ENCODE measurements at regions of chr1 and their contacts with region 1.

Region 1: DNA sequence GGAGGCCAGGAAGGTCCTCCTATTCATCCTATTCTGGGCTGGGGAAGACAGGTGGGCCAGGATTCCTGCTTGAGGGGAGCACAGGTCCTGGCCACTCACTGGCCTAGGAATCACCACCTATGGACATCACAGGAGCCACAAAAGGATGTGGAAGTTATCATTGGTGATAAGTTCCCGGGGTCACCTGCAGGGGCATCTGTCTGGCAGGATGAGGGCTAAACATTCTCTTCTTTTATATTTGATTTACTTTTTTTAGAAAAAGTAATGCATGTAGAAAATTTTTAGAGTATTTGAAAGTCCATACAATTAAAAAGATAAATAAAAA is 33.2 kb upstream of the KIAA0040 start:
- DNase-seq: no peak
- ATAC-seq: peak; percentile 22
- H3K4me3 ChIP-seq: no peak overlapping the region
- H3K4me3 Mint-ChIP-seq: peak overlapping the region; percentile 74
- H3K27ac ChIP-seq: peak overlapping the region; percentile 82 to 86
- H3K27ac Mint-ChIP-seq: peak overlapping the region; percentile 95
- H3K4me1 ChIP-seq: peaks cover 62 to 65% of the 10 kb centered on the region in 2 donors
- H3K4me1 Mint-ChIP-seq: peaks cover 81% of the 10 kb centered on the region
- H3K27me3 ChIP-seq: no peaks in the 10 kb centered on the region
- H3K27me3 Mint-ChIP-seq: no peaks in the 10 kb centered on the region
- CTCF ChIP-seq: peak; percentile 57

Region 2: GRCh38 chr1:175162955-175163354 is 62.8 kb before region 1 on chr1:
- CTCF ChIA-PET with region 1: no interaction called
- POLR2A ChIA-PET with region 1: no interaction called
- intact Hi-C with region 1: no loop called
- DNase-seq: no peak
- ATAC-seq: no peak
- H3K4me3 ChIP-seq: no peak overlapping the region
- H3K4me3 Mint-ChIP-seq: no peak overlapping the region
- H3K27ac ChIP-seq: peak overlapping the region in 1 of 2 donors; percentile 5
- H3K27ac Mint-ChIP-seq: peak overlapping the region; percentile 67
- H3K4me1 ChIP-seq: no peaks in the 10 kb centered on the region
- H3K4me1 Mint-ChIP-seq: peaks cover 13% of the 10 kb centered on the region
- H3K27me3 ChIP-seq: no peaks in the 10 kb centered on the region
- H3K27me3 Mint-ChIP-seq: no peaks in the 10 kb centered on the region
- CTCF ChIP-seq: no peak

Region 3: DNA sequence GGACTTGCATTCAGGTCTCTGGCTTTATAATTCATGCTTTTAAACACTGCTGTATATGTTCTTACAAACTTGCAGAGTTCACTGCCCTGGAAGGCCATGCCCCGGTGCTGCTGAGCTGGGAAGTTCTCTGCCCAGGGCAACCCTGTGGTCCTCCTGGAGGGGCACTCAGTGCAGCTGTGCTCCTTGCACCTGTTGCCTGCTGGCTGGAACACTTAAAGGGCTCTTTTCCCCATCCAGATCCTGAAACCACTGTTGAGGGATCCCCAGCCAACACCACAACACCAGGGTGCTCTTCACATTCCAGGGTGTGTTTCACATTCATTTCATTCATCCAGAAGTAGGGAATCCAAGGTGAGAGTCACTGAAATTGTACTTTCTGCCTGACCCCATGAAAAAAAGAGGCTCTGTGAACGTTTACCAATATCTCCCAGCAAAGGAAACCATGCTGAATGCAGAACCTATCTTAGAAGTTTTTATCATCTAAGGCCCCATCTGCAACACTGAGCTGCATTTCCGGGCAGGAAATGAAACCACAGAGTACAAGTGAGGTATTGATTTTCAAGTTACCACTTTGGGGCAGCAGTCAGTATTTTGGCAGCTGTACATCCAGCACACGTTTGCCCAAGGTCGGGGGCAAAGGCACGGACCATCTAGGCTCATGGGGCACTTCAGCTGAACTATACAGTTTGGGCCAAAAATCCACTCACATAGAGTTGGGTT is 16.8 kb before region 1 on chr1:
- CTCF ChIA-PET with region 1: interaction called, 8 read pairs
- POLR2A ChIA-PET with region 1: interaction called, 6 read pairs
- intact Hi-C with region 1: loop called (anchors 1 kb)
- DNase-seq: peak; percentile 75
- ATAC-seq: peak; percentile 92
- H3K4me3 ChIP-seq: peak overlapping the region in 2 of 5 experiments; percentile 5 to 47
- H3K4me3 Mint-ChIP-seq: peak overlapping the region; percentile 86
- H3K27ac ChIP-seq: peak overlapping the region; percentile 86 to 88
- H3K27ac Mint-ChIP-seq: peak overlapping the region; percentile 99
- H3K4me1 ChIP-seq: peaks cover 45 to 60% of the 10 kb centered on the region in 2 donors
- H3K4me1 Mint-ChIP-seq: peaks cover 69% of the 10 kb centered on the region
- H3K27me3 ChIP-seq: no peaks in the 10 kb centered on the region
- H3K27me3 Mint-ChIP-seq: no peaks in the 10 kb centered on the region
- CTCF ChIP-seq: no peak

Region 4: DNA sequence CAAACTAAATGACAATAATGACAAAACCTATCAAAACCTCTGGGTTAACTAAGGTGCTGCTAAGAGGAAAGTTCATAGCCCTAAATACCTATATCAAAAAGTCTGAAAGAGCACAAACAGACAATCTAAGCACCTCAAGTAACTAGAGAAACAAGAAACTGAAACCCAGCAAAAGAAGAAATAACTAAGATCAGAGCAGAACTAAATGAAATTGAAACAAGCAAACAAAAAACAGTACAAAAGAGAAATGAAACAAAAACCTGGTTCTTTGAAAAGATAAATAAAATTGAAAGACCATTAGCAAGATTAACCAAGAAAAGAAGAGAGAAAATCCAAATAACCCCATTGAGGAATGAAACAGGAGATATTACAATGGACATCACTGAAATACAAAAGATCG is 11.6 kb after region 1 on chr1:
- CTCF ChIA-PET with region 1: interaction called, 7 read pairs
- POLR2A ChIA-PET with region 1: interaction called, 4 read pairs
- intact Hi-C with region 1: loop called (anchors 1 kb)
- DNase-seq: peak; percentile 50
- ATAC-seq: peak; percentile 66
- H3K4me3 ChIP-seq: no peak overlapping the region
- H3K4me3 Mint-ChIP-seq: peak overlapping the region; percentile 49
- H3K27ac ChIP-seq: peak overlapping the region; percentile 27 to 51
- H3K27ac Mint-ChIP-seq: peak overlapping the region; percentile 83
- H3K4me1 ChIP-seq: peaks cover 52 to 54% of the 10 kb centered on the region in 2 donors
- H3K4me1 Mint-ChIP-seq: peaks cover 69% of the 10 kb centered on the region
- H3K27me3 ChIP-seq: no peaks in the 10 kb centered on the region
- H3K27me3 Mint-ChIP-seq: no peaks in the 10 kb centered on the region
- CTCF ChIP-seq: no peak

Region 5: GRCh38 chr1:175774921-175775320 is 549.2 kb after region 1 on chr1:
- CTCF ChIA-PET with region 1: no interaction called
- POLR2A ChIA-PET with region 1: no interaction called
- intact Hi-C with region 1: no loop called
- DNase-seq: no peak
- ATAC-seq: no peak
- H3K4me3 ChIP-seq: no peak overlapping the region
- H3K4me3 Mint-ChIP-seq: no peak overlapping the region
- H3K27ac ChIP-seq: no peak overlapping the region
- H3K27ac Mint-ChIP-seq: no peak overlapping the region
- H3K4me1 ChIP-seq: no peaks in the 10 kb centered on the region
- H3K4me1 Mint-ChIP-seq: no peaks in the 10 kb centered on the region
- H3K27me3 ChIP-seq: peaks cover 0 to 6% (median 2%) of the 10 kb centered on the region in 4 experiments
- H3K27me3 Mint-ChIP-seq: peaks cover 27% of the 10 kb centered on the region
- CTCF ChIP-seq: no peak

Measured in B cell (primary cell).